H1 (cell line): ENCODE measurements at regions of chr19 and their contacts with region 1.

Region 1: DNA sequence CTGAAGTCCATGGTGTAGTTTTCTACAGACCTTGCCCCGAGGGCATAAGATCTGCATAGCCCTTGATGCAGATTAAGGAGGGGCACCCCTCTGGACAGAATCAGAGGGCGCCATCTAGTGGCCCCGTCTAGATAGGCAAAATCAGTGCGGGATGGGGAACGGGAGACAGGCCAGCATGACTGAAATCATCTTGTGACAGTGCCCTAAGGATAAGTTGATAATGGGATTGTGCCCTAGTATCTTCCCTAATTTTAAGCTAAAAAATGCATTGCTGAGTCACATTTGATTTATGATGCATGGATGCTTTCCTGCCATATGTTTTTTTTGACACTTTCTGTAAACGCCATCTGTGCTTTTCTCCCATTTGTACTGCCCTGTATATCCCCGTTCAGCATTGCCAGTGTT is 19.0 kb upstream of the GPI start:
- DNase-seq: peak; percentile 65 to 93
- H3K4me3 ChIP-seq: no peak overlapping the region
- H3K27ac ChIP-seq: no peak overlapping the region
- H3K4me1 ChIP-seq: no peaks in the 10 kb centered on the region; a peak in 1 of 7 replicates
- H3K27me3 ChIP-seq: no peaks in the 10 kb centered on the region
- CTCF ChIP-seq: peak; percentile 86 to 95 (median 94)
- EP300 ChIP-seq: no peak
- POLR2A ChIP-seq: no peak
- RAD21 ChIP-seq: peak; percentile 84 to 85

Region 2: GRCh38 chr19:34220472-34221063 is 125.4 kb before region 1 on chr19:
- CTCF ChIA-PET with region 1: interaction called, 13 read pairs
- POLR2A ChIA-PET with region 1: no interaction called
- DNase-seq: peak in 1 of 2 experiments; percentile 73
- H3K4me3 ChIP-seq: no peak overlapping the region
- H3K27ac ChIP-seq: no peak overlapping the region
- H3K4me1 ChIP-seq: peaks cover 8 to 13% (median 11%) of the 10 kb centered on the region in 4 experiments
- H3K27me3 ChIP-seq: no peaks in the 10 kb centered on the region
- CTCF ChIP-seq: peak; percentile 1 to 77 (median 54)
- EP300 ChIP-seq: no peak
- POLR2A ChIP-seq: no peak
- RAD21 ChIP-seq: peak; percentile 50 to 61

Region 3: GRCh38 chr19:34232566-34233481 is 113.1 kb before region 1 on chr19:
- CTCF ChIA-PET with region 1: interaction called, 10 read pairs
- POLR2A ChIA-PET with region 1: no interaction called
- DNase-seq: no peak
- H3K4me3 ChIP-seq: no peak overlapping the region
- H3K27ac ChIP-seq: no peak overlapping the region
- H3K4me1 ChIP-seq: peaks cover 2 to 9% (median 6%) of the 10 kb centered on the region in 4 experiments; a peak in 4 of 7 replicates
- H3K27me3 ChIP-seq: no peaks in the 10 kb centered on the region
- CTCF ChIP-seq: no peak
- EP300 ChIP-seq: no peak
- POLR2A ChIP-seq: no peak
- RAD21 ChIP-seq: no peak

Region 4: DNA sequence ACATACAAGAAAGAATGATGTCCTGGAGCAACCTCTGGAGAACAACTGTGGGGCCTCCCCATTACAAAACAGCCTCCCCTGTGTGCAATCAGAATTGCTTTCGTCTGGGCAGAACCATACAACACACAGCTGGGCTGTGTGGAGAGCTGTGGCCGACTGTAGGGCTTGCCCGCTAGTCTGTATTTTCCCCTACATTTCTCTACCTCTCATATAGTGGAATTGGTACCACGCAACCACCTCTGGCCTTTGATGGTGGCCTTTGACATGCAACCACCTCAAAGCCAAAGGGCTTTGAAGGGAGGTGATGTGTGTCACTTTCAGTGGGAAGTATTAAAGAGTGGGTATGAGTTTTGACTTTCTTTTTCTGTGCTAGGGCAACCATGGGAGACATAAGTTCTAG is 57.6 kb before region 1 on chr19:
- CTCF ChIA-PET with region 1: no interaction called
- POLR2A ChIA-PET with region 1: no interaction called
- DNase-seq: no peak
- H3K4me3 ChIP-seq: no peak overlapping the region
- H3K27ac ChIP-seq: no peak overlapping the region
- H3K4me1 ChIP-seq: no peaks in the 10 kb centered on the region
- H3K27me3 ChIP-seq: no peaks in the 10 kb centered on the region
- CTCF ChIP-seq: no peak
- EP300 ChIP-seq: no peak
- POLR2A ChIP-seq: no peak
- RAD21 ChIP-seq: no peak

Region 5: DNA sequence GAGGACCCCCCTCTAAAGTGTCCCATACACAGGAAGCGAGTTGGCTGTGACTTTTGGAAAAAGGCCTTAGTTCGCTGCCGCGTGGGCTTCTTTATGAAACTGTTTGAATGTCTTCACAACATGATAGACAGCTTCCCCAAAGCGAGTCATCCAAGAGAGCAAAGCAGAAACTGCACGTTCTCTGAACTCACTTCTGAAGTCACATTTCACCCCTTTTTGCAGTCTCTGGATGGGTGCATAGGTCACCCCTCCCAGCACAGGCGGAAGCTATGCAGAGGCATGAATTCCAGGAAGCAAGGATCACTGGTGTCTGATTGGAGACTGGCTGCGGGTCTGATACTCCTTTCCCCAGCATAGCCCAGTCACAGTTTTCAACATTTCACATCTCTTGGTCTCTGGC is 29.6 kb after region 1 on chr19:
- CTCF ChIA-PET with region 1: no interaction called
- POLR2A ChIA-PET with region 1: no interaction called
- DNase-seq: no peak
- H3K4me3 ChIP-seq: no peak overlapping the region
- H3K27ac ChIP-seq: no peak overlapping the region
- H3K4me1 ChIP-seq: no peaks in the 10 kb centered on the region
- H3K27me3 ChIP-seq: no peaks in the 10 kb centered on the region
- CTCF ChIP-seq: no peak
- EP300 ChIP-seq: no peak
- POLR2A ChIP-seq: no peak
- RAD21 ChIP-seq: no peak